ENCODE measurements at regions of chr4 and their contacts with region 1.

Region 1: GRCh38 chr4:110510955-110511544 is 35.1 kb downstream of the ENPEP start:
- DNase-seq: peak in 1 of 42 donors; percentile 38

Region 2: DNA sequence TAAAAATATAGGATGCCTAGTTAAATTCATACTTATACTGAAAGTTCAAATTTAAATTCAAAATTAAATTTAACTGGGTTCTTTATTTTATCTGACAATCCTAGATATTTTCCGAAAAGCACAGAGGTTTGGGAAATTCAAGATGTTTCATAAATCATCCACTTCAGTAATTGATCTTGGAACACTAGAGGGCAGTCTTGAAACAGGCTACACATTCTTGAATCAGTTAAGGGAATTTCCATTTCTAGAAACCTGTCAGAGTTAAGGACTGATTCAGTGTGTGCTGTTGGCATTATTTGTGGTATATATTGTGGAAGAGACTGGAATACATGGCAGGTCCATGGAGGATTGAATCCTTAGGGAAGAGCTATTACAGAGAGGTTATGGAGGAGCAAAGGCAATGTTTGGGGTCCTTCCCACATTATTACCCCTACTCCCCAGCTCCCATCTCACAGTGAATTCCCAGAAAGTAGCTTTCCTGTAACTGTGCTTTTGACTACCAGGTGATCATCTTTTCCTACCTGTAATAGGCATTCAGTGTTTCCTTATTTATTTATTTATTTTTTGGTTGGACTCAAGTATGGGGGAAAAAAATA is 505.5 kb before region 1 on chr4:
- intact Hi-C with region 1: loop called (anchors 5 kb)
- DNase-seq: peak in 5 of 42 donors; percentile 16 to 64 (median 28)

Region 3: DNA sequence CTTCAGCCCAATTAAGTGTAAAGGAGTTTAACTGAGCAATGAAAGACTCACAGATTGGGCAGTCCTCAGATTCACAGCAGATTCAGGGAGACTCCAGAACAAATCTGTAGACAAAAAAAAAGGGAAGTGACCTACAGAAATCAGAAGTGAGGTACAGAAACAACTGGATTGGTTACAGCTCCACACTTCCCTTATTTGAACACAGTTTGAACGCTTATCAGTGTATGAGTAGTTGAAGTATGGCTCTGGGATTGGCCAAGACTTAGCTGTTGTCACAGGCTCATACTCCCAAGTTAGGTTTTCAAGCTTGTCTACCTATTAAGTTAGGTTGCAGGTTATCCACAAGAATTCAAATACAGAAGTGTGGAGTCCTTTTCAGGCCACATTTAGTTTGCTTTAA is 200.3 kb before region 1 on chr4:
- intact Hi-C with region 1: loop called (anchors 10 kb)
- DNase-seq: no peak

Region 4: DNA sequence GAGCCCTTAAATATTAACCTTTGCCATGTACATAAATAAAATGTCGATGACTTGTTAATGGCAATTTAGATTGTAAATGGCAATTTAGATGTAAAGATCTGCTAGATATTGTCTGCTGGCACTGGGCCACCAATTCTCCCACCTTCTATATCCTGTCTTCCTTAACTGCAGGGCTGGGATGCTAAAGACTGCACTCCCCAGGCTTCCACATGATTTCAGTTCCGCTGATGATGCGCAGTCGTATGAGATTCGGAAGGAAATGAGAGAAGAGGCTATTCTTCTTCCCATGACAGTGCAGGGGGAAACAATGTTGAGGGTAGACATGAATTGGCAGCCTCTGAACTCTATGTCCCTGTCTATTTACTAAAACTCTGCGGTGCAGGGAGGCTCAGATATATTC is 56.2 kb after region 1 on chr4:
- intact Hi-C with region 1: no loop called
- DNase-seq: no peak

Region 5: GRCh38 chr4:110815950-110816349 is 304.9 kb after region 1 on chr4:
- intact Hi-C with region 1: no loop called
- DNase-seq: no peak

Measured in head of caudate nucleus (tissue), 42 donors.